Naive thymus-derived CD4-positive, alpha-beta T cell (primary cell): ENCODE measurements at regions of chr14 and their contacts with region 1.

Region 1: DNA sequence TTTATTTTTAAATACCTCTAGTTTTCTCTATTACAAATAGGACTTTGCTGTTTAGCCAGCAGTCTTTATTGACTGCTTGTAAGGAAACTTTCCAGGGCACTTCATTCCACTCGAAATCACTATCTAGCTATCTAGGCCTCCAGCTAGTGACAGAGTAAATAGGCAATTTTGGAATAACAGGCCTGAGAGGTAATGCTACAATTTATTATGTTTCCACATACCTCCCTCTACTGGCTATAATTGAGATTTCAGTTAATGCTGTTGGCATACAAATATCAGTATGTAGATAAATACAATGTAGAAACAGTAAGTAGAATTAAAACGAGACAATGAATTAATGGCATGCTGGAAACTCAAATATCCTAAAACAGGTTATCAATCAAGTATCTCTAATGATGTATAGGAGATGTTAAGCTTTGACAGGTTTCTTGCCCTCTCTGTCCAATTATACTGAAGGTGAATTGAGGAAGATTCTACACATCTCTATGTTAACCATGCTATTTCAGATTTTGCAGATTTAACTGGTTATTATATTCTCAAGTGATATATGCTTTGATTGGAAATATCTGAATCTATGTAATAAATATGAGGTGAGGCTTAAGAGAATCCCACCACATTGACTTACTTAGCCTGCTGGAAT is 7.2 kb downstream of the DTD2 start:
- DNase-seq: peak in 2 of 9 donors; percentile 1 to 13
- ATAC-seq: peak; percentile 75
- H3K4me3 ChIP-seq: no peak overlapping the region
- H3K4me3 Mint-ChIP-seq: no peak overlapping the region
- H3K27ac ChIP-seq: no peak overlapping the region
- H3K27ac Mint-ChIP-seq: peak overlapping the region in 2 of 9 donors; percentile 20 to 31
- H3K4me1 ChIP-seq: no peaks in the 10 kb centered on the region
- H3K4me1 Mint-ChIP-seq: peaks cover 0 to 23% (median 9%) of the 10 kb centered on the region in 7 donors
- H3K27me3 ChIP-seq: no peaks in the 10 kb centered on the region
- H3K27me3 Mint-ChIP-seq: no peaks in the 10 kb centered on the region

Region 2: GRCh38 chr14:30756596-30756995 is 693.5 kb before region 1 on chr14:
- CTCF ChIA-PET with region 1: no interaction called
- POLR2A ChIA-PET with region 1: no interaction called
- intact Hi-C with region 1: no loop called
- DNase-seq: no peak
- ATAC-seq: no peak
- H3K4me3 ChIP-seq: no peak overlapping the region
- H3K4me3 Mint-ChIP-seq: no peak overlapping the region
- H3K27ac ChIP-seq: no peak overlapping the region
- H3K27ac Mint-ChIP-seq: no peak overlapping the region
- H3K4me1 ChIP-seq: no peaks in the 10 kb centered on the region
- H3K4me1 Mint-ChIP-seq: no peaks in the 10 kb centered on the region
- H3K27me3 ChIP-seq: no peaks in the 10 kb centered on the region
- H3K27me3 Mint-ChIP-seq: peaks cover 0 to 18% (median 15%) of the 10 kb centered on the region in 5 donors

Region 3: GRCh38 chr14:31377433-31377832 is 72.7 kb before region 1 on chr14:
- CTCF ChIA-PET with region 1: interaction called, 3 read pairs
- POLR2A ChIA-PET with region 1: no interaction called
- intact Hi-C with region 1: loop called in 1 of 2 experiments (anchors 5 kb)
- DNase-seq: no peak
- ATAC-seq: no peak
- H3K4me3 ChIP-seq: no peak overlapping the region
- H3K4me3 Mint-ChIP-seq: no peak overlapping the region
- H3K27ac ChIP-seq: no peak overlapping the region
- H3K27ac Mint-ChIP-seq: peak overlapping the region in 2 of 9 donors; percentile 18 to 42
- H3K4me1 ChIP-seq: no peaks in the 10 kb centered on the region
- H3K4me1 Mint-ChIP-seq: peaks cover 0 to 17% (median 0%) of the 10 kb centered on the region in 7 donors
- H3K27me3 ChIP-seq: no peaks in the 10 kb centered on the region
- H3K27me3 Mint-ChIP-seq: no peaks in the 10 kb centered on the region